ENCODE measurements at regions of chr7 and their contacts with region 1.

Region 1: DNA sequence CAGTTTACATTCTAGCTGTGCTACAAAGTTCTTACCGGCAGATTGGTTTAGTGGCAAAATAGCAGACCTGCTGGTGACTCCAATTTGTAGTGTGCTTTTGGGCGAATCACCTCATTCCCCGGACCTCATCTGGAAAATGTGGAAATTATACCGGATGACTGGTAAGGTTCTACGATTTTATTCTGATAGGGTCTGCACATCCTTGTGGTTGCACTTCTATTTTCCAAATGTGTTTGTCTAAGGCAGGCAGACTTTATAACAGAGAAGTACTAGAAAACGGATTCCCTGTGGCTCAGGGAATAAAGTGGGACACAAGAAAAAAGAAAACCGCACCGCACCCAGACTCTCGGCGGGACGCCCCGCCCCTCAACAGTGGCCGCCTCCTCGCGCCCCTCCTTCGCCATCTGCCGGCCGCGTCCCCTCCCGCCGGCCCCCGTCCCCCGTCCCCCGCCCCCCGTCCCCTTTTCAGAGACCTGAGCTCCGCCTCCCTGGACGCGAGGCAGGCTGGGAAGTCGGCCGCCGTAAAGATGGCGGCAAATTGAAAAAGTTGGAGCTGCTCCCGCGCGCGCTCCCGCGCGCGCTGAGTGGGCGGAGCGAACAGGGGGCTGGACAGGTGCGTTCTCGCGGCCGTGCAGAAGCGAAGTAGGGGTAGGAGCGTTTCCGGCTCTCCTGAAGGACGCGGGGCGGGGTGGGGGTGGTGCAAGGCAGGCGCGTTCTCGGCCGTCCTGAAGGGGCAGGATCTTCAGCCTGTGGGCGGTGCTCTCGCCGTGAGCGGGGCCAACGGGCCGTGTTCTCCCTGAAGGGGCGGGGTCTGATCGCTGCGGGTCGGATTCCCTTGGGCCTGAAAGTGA is 531 bp upstream of the CCM2 start:
- DNase-seq: peak; percentile 95 to 100 (median 99)
- H3K4me3 ChIP-seq: peak overlapping the region; percentile 48 to 92 (median 75)
- H3K27ac ChIP-seq: peak overlapping the region; percentile 41 to 94 (median 85)
- H3K27me3 ChIP-seq: no peaks in the 10 kb centered on the region
- CTCF ChIP-seq: peak in 37 of 56 donors; percentile 4 to 57 (median 30)

Region 2: GRCh38 chr7:44858161-44858560 is 141.3 kb before region 1 on chr7:
- intact Hi-C with region 1: loop called in 1 of 2 experiments (anchors 10 kb)
- DNase-seq: no peak
- H3K4me3 ChIP-seq: no peak overlapping the region
- H3K27ac ChIP-seq: no peak overlapping the region
- H3K27me3 ChIP-seq: no peaks in the 10 kb centered on the region
- CTCF ChIP-seq: peak in 37 of 56 donors; percentile 10 to 56 (median 32)

Region 3: DNA sequence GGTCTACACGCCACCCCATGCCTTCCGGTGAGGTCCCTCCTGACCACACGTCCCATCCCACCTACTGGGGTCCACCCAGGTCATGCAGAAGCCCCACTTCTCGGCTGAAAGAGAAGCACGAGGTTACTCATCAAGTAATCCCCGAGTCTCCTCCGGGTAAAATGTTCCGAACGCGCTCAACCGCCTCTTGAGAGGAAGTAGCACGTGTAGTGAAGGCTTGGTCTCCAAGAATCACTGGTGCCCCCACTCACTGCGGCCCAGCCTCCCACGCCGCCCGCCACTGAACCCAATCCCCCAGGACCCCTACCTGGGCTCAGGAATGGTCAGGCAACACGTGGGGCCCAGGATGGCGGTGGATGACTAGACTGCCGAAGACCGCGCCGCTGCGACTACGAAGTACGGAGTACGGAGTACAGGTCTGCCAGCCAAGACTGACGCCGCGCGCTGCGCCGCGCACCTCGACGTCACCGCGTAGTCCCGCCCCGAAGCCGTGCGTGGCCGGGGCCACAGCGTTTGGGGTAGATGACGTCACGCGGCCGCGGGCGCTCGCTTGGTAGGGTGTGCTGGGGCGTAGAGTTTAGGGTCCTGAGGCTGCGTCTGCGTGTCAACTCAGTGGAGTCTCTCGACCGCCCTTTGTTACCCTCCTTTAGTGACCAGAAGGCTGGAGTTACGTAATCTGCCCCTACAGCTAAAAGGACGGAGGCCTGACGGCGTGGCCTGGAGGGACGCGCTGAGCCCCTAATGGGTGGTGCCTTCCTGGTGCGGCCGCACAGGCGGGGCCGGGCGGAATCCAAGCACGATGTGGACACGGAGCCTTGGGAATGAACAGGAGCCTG is 13.0 kb before region 1 on chr7:
- intact Hi-C with region 1: loop called in 1 of 2 experiments (anchors 1 kb)
- DNase-seq: peak; percentile 79 to 96 (median 90)
- H3K4me3 ChIP-seq: peak overlapping the region; percentile 49 to 95 (median 74)
- H3K27ac ChIP-seq: peak overlapping the region; percentile 63 to 97 (median 93)
- H3K27me3 ChIP-seq: no peaks in the 10 kb centered on the region
- CTCF ChIP-seq: peak in 11 of 56 donors; percentile 1 to 23 (median 10)

Region 4: DNA sequence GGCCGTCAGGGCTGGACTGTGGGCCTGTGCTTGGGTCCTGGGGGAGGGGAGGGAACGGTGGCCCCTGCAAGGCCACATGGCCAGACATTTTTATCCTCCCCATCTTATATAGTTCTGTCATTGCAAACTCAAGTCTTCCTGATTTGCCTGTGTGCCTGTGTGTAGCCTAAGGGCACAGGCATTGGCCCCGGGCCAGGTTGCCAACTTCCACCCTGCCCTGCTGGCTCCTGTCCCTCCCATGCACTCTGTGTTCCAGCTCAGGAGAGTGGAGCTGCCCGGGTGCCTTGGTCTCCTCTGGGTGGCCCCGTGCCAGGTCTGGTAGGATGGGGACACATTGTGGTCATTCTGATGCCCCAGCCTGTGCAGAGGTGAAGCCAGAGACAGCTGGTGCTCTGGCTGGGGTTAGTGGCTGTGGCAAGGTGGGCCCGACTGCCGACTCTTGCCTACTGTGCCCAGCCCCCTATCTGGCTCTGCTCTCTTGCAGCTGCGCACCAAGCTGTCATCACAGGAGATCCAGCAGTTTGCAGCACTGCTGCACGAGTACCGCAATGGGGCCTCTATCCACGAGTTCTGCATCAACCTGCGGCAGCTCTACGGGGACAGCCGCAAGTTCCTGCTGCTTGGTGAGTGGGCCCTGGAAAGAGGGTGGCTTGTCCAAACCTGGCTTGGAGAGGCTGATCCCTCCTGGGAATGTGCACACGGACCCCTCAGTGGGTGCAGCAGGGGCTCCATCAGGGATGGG is 74.5 kb after region 1 on chr7:
- intact Hi-C with region 1: loop called in 1 of 2 experiments (anchors 5 kb)
- DNase-seq: peak in 7 of 10 donors; percentile 45 to 72 (median 62)
- H3K4me3 ChIP-seq: peak overlapping the region in 50 of 59 donors; percentile 2 to 55 (median 26)
- H3K27ac ChIP-seq: peak overlapping the region; percentile 33 to 93 (median 85)
- H3K27me3 ChIP-seq: no peaks in the 10 kb centered on the region
- CTCF ChIP-seq: no peak

Region 5: GRCh38 chr7:45089341-45089891 is 89.9 kb after region 1 on chr7:
- intact Hi-C with region 1: loop called (anchors 1 to 5 kb)
- DNase-seq: peak; percentile 94 to 98 (median 98)
- H3K4me3 ChIP-seq: peak overlapping the region; percentile 62 to 96 (median 87)
- H3K27ac ChIP-seq: peak overlapping the region; percentile 30 to 100 (median 98)
- H3K27me3 ChIP-seq: no peaks in the 10 kb centered on the region
- CTCF ChIP-seq: peak in 15 of 56 donors; percentile 8 to 37 (median 27)

Measured in dorsolateral prefrontal cortex (tissue), 120 donors.